ENCODE measurements at regions of chr1 and their contacts with region 1.

Region 1: DNA sequence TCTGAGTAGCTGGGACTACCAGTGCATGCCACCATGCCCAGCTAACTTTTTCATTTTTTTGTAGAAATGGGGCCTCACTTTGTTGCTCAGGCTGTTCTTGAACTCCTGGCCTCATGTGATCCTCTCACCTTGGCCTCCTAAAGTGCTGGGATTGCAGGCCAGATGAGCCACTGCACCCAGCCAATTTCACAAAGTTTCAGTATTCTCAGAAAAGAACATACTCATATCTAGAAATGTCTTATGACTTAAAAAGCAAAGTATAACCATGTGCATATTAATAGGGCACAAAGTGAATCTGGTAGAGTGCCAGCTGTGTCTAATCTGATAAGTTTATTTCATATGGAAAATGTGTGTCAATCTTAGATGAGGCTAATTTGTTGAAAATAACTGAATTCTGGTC is 87.5 kb upstream of the CACYBP start:
- DNase-seq: no peak
- H3K4me3 Mint-ChIP-seq: no peak overlapping the region
- H3K27ac Mint-ChIP-seq: peak overlapping the region; percentile 27
- H3K4me1 Mint-ChIP-seq: peaks cover 27% of the 10 kb centered on the region
- H3K27me3 Mint-ChIP-seq: no peaks in the 10 kb centered on the region

Region 2: GRCh38 chr1:174308604-174309003 is 603.7 kb before region 1 on chr1:
- intact Hi-C with region 1: no loop called
- DNase-seq: no peak
- H3K4me3 Mint-ChIP-seq: no peak overlapping the region
- H3K27ac Mint-ChIP-seq: no peak overlapping the region
- H3K4me1 Mint-ChIP-seq: no peaks in the 10 kb centered on the region
- H3K27me3 Mint-ChIP-seq: no peaks in the 10 kb centered on the region

Region 3: DNA sequence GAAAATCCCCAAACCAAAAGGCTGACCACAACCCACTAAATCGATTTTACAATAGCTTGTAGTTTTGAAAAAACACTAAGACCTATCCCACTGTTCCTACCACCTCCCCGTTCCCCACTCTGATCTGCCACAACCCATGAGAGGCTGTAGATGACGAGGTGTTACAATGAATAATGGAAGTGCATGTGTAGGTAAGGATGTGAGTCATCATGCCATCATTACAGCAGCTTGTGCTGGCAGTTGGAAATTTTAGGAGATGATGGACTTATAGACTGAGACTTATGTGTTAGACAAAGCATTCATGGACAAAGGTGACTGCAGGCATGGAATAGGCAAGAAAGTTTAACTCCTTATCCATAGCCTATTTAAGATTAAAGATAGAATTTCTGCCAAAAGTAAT is 97.2 kb before region 1 on chr1:
- intact Hi-C with region 1: loop called (anchors 5 kb)
- DNase-seq: no peak
- H3K4me3 Mint-ChIP-seq: no peak overlapping the region
- H3K27ac Mint-ChIP-seq: no peak overlapping the region
- H3K4me1 Mint-ChIP-seq: peaks cover 28% of the 10 kb centered on the region
- H3K27me3 Mint-ChIP-seq: peaks cover 3% of the 10 kb centered on the region

Region 4: GRCh38 chr1:174850726-174851125 is 61.5 kb before region 1 on chr1:
- intact Hi-C with region 1: no loop called
- DNase-seq: no peak
- H3K4me3 Mint-ChIP-seq: no peak overlapping the region
- H3K27ac Mint-ChIP-seq: no peak overlapping the region
- H3K4me1 Mint-ChIP-seq: no peaks in the 10 kb centered on the region
- H3K27me3 Mint-ChIP-seq: no peaks in the 10 kb centered on the region

Measured in activated T-helper 1 cell treated with anti-CD3 and anti-CD28 coated beads, Interleukin-12 subunit alpha, Interleukin-12 subunit beta, Interleukin-2, Interleukin-4 antibody, amounts not matched to agents 30 ng/mL and 10 ng/mL and 1 ng/mL, durations not matched to agents 14 hours and 24 hours and 36 hours (primary cell).